Calu3 (cell line): ENCODE measurements at regions of chr3 and their contacts with region 1.

Region 1: DNA sequence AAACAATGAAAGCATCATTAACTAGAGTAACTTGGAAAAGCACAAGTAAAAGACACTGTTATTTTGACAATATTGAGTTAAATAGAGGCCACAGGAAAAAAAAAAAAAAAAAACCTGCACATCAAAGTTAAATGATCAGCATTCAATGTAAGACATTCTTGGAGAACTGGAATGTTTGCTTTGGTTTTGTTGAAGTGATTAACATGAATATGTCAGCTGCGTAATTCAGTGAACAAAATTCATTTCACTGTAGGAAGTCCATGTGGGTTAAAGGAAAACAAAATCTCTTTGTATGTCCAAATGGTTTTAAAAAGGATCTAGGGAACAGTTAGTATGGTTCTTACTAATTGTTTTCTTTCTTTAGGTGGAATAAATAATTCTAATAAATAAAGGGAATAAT is 252.8 kb upstream of the CNTN6 start:
- DNase-seq: no peak
- H3K4me3 Mint-ChIP-seq: no peak overlapping the region
- H3K27ac Mint-ChIP-seq: no peak overlapping the region
- H3K4me1 Mint-ChIP-seq: peaks cover 13% of the 10 kb centered on the region
- H3K27me3 Mint-ChIP-seq: no peaks in the 10 kb centered on the region
- CTCF ChIP-seq: no peak

Region 2: GRCh38 chr3:420584-420983 is 419.4 kb before region 1 on chr3:
- CTCF ChIA-PET with region 1: no interaction called
- intact Hi-C with region 1: loop called (anchors 10 kb)
- DNase-seq: no peak
- H3K4me3 Mint-ChIP-seq: no peak overlapping the region
- H3K27ac Mint-ChIP-seq: no peak overlapping the region
- H3K4me1 Mint-ChIP-seq: peaks cover 8% of the 10 kb centered on the region
- H3K27me3 Mint-ChIP-seq: no peaks in the 10 kb centered on the region
- CTCF ChIP-seq: no peak

Region 3: DNA sequence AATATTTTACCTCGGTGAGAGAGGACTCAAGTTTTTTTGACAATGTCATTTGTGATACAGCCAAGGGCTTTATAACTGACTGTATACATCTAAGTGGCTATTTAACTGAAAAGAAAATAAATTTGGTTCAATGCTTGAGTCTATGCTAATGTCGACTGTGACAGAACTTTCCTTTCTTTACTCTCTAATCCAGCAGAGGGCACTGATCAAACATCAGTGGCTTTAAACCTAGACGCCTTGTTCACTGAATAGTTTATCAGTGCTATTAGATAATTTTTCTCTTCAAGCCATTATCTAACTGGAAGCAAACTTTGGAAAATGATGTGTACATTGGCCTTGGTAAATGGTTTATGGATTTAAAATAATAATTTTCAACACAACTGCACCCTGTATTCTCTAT is 358.3 kb before region 1 on chr3:
- CTCF ChIA-PET with region 1: no interaction called
- intact Hi-C with region 1: loop called (anchors 10 kb)
- DNase-seq: peak; percentile 6
- H3K4me3 Mint-ChIP-seq: no peak overlapping the region
- H3K27ac Mint-ChIP-seq: no peak overlapping the region
- H3K4me1 Mint-ChIP-seq: no peaks in the 10 kb centered on the region
- H3K27me3 Mint-ChIP-seq: no peaks in the 10 kb centered on the region
- CTCF ChIP-seq: peak; percentile 33